AG04450 (cell line): ENCODE measurements at regions of chr11 and their contacts with region 1.

Region 1: GRCh38 chr11:65274735-65275682 is 13.2 kb downstream of the POLA2 start:
- DNase-seq: peak; percentile 96
- H3K4me3 ChIP-seq: no peak overlapping the region
- H3K27ac ChIP-seq: peak overlapping the region; percentile 65
- H3K27me3 ChIP-seq: no peaks in the 10 kb centered on the region
- CTCF ChIP-seq: peak; percentile 79

Region 2: GRCh38 chr11:65069217-65069616 is 205.8 kb before region 1 on chr11:
- CTCF ChIA-PET with region 1: no interaction called
- POLR2A ChIA-PET with region 1: no interaction called
- DNase-seq: no peak
- H3K4me3 ChIP-seq: no peak overlapping the region
- H3K27ac ChIP-seq: no peak overlapping the region
- H3K27me3 ChIP-seq: no peaks in the 10 kb centered on the region
- CTCF ChIP-seq: no peak

Region 3: GRCh38 chr11:65261591-65262380 is 13.2 kb before region 1 on chr11 and contains the start of gene POLA2:
- CTCF ChIA-PET with region 1: interaction called, 21 read pairs
- POLR2A ChIA-PET with region 1: interaction called, 5 read pairs
- DNase-seq: peak; percentile 86
- H3K4me3 ChIP-seq: peak within 1 kb of the TSS; percentile 83
- H3K27ac ChIP-seq: peak within 1 kb of the TSS; percentile 84
- H3K27me3 ChIP-seq: no peaks in the 10 kb centered on the region
- CTCF ChIP-seq: no peak
- polyA plus RNA-seq, gene POLA2: 10.4 and 14.1 TPM in 2 replicates

Region 4: DNA sequence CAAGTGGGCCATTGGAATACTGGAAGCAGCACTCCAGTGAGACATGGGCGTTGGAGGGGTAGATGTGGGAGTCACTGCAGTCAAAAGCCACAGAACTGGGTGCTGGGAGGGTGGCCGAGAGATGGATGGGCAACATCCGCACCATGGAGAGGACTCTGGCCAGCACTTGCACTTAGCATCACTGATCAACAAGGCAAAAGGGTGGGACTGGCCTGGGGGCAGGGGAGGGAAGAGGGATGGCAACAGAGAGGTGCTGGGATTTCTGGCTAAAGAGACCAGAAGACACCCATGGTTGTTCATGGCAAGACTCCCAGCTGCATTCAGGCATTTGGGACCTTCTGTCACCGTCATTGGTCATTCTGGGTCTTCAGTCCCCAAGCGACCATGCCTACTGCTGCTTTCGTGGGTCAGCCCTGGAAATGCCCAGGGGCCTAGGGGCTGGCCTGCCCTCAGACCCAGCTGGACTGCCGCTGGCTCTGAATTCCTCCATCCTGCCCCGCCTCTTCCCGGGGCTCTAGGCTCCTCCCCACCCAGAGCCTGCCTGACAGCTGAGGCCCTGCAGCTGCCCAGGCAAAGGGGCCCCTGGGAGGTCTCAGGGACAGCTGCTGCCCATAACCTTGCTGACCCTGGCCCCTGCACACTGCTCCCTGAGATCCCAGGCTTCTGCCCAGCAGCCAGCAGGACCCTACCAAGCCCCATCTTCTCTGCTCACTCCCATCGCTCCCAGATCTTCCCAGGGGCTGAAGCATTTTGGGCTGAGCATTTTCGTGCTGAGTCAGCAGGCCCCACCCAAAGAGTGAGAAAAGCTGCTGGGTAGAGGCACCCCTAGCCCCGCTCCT is 26.7 kb after region 1 on chr11:
- CTCF ChIA-PET with region 1: interaction called, 16 read pairs
- POLR2A ChIA-PET with region 1: interaction called, 7 read pairs
- DNase-seq: no peak
- H3K4me3 ChIP-seq: no peak overlapping the region
- H3K27ac ChIP-seq: peak overlapping the region; percentile 68
- H3K27me3 ChIP-seq: no peaks in the 10 kb centered on the region
- CTCF ChIP-seq: no peak

Region 5: GRCh38 chr11:65329944-65330403 is 55.0 kb after region 1 on chr11:
- CTCF ChIA-PET with region 1: interaction called, 506 read pairs
- POLR2A ChIA-PET with region 1: interaction called, 47 read pairs
- DNase-seq: peak; percentile 83
- H3K4me3 ChIP-seq: no peak overlapping the region
- H3K27ac ChIP-seq: no peak overlapping the region
- H3K27me3 ChIP-seq: no peaks in the 10 kb centered on the region
- CTCF ChIP-seq: peak; percentile 70

Region 6: DNA sequence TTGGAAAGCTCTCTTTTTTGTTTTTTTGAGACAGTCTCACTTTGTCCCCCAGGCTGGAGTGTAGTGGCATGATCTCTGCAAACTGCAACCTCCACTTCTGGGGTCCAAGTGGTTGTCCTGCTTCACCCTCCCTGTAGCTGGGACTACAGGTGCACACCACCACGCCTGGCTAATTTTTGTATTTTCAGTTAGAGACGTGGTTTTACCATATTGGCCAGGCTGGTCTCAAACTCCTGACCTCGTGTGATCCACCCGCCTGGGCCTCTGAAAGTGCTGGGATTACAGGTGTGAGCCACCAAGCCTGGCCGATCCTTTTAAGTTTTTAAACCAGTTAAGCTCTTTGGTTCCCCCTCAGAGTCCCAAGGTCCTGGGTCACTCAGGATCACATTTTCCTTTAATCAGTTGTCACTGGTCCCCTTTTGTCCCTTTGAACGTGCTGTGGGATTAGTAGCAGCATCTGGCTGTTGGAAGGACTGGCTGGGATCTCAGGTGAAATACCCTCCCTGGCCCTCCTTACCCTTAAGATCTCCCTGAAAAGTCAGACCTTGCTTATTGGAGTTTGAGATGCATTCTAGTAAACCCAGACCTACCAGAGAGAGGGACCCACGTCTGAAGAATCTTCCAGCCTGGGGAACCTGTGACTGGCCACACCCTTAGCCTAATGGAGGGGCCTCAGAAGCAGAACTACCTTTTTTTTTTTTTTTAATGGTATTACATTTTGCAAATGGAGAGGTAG is 231.9 kb after region 1 on chr11:
- CTCF ChIA-PET with region 1: interaction called, 7 read pairs
- POLR2A ChIA-PET with region 1: interaction called, 10 read pairs
- DNase-seq: peak; percentile 82
- H3K4me3 ChIP-seq: peak overlapping the region; percentile 97
- H3K27ac ChIP-seq: peak overlapping the region; percentile 89
- H3K27me3 ChIP-seq: no peaks in the 10 kb centered on the region
- CTCF ChIP-seq: no peak